ENCODE measurements at regions of chr22 and their contacts with region 1.

Region 1: DNA sequence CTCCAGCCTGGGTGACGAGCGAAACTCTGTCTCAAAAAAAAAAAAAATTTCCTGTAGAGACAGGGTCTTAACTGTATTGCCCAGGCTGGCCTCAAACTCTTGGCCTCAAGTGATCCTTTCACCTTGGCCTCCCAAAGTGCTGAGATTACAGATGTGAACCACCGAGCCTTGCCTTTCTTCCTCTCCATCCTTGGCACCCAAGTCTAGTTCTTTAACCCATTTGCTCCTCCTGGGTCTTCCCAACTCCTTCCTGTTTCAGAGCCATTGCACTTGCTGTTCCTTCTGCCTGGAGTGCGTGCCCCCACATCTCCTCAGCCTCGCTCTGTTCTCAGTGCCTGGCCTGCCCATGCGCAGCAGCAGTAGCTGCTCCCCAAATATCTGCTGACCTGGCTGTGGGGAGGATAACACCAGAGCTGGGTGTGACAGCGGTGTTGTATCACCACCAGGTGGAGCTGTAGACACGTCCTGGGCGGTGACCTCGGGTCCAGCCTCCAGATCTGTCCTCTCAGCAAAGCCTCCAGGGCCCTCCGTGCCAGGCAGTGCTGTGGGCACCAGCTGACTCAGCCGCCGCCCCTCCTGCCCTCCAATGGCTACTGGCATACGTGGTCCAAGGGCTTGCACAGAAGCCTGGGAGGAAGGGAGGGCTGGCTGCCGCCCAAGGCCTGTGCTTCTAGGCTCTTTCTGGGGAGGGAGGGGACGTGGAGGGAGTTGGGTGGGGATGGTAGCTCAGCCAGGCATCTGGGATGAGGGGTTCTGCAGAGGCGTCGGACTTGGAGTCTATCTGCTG is 22.0 kb downstream of the TEF start:
- DNase-seq: peak; percentile 95
- CTCF ChIP-seq: peak; percentile 94

Region 2: DNA sequence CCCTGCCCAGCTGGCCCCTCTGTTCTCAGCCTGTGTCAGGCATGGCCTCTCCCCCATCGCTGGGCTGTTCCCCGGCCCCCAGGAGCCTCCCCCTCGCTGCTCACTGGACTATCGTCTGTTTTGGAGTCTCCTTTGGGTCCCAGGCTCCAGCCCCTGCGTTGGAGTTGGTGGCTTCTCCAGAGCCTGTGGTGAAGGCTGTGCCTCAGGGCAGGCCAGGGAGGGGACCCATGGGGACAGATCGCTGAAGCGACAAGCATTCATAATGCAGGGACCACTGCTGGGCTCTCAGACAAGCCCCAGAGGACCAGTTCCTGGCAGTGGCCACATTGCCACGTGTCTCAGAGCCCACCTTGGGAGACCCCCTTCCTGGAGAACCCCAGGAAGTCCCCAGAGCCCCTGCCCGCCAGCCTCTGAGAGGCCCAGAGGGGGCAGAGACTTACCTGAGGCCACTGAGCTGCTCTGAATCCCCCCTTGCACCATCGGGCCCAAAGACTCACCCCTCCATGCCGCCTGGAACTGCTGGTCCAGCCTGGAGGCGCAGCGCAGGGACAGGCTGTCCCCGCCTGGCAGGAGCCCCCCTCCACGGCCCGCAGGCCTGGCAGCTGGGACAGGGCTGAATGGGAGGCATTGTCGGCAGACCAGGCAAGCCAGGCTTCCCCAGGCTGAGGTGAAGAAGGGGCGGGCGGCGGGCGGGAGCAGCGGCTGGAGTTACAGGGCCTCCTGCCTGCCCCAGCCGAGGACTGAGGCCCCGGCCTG is 163.2 kb before region 1 on chr22 and contains the start of gene CHADL:
- CTCF ChIA-PET with region 1: no interaction called
- POLR2A ChIA-PET with region 1: no interaction called
- DNase-seq: no peak
- CTCF ChIP-seq: no peak

Region 3: DNA sequence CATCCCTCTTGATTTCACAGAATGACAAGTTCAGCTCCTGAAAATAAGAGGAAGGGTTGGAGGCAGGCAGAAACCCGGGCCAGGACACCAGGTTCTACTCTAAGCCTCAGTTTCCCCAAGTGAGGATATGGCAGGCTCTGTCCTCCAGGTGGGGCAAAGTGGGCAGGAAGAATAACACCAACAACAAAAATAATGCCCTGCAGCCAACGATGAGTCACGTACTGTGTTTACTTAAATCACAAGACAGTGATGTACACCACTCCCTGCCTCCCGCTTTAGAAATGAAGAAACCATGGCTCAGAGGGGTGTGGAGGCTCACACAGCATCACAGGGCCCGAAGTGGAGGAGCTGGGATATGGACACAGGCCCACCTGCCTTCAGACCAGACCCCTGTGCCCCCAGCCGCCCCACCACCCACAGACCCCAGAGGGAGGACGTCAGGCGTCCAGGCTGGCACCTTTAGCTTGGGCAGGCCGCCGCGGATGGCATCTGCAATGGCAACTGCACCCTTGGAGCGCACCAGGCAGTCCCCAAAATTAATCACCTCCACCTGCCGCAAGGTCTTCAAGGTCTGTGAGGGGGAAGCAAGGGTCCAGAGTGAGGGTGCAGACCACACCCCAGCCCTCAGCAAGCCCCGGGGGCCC is 147.3 kb before region 1 on chr22:
- CTCF ChIA-PET with region 1: no interaction called
- POLR2A ChIA-PET with region 1: no interaction called
- DNase-seq: no peak
- CTCF ChIP-seq: no peak

Region 4: GRCh38 chr22:41381329-41382097 is 22.2 kb before region 1 on chr22 and contains the start of gene TEF:
- CTCF ChIA-PET with region 1: interaction called, 36 read pairs
- POLR2A ChIA-PET with region 1: interaction called, 6 read pairs
- DNase-seq: peak; percentile 99
- CTCF ChIP-seq: no peak

Region 5: DNA sequence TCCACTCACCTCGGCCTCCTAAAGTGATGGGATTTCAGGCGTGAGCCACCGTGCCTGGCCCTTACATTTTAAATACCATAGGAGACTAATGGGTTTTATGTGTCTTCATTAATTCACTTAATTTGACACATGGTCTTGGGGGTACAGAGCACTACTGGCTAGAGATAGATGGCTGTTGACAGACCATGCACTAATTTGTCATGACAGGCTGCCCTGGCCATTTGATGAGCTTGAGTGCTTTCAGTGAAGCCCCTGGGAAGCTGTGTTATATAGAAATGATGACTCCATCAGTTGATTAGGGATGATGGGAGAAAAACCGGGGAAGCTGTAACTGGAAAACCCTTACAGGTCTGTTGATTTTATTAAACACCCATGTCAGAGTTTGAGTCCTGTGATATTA is 58.2 kb after region 1 on chr22:
- CTCF ChIA-PET with region 1: interaction called, 14 read pairs
- POLR2A ChIA-PET with region 1: no interaction called
- DNase-seq: no peak
- CTCF ChIP-seq: no peak

Region 6: GRCh38 chr22:41501209-41501608 is 97.5 kb after region 1 on chr22:
- CTCF ChIA-PET with region 1: interaction called, 66 read pairs
- POLR2A ChIA-PET with region 1: no interaction called
- DNase-seq: peak; percentile 65
- CTCF ChIP-seq: no peak

Region 7: GRCh38 chr22:41532908-41533825 is 129.4 kb after region 1 on chr22:
- CTCF ChIA-PET with region 1: interaction called, 190 read pairs
- POLR2A ChIA-PET with region 1: no interaction called
- DNase-seq: peak; percentile 81
- CTCF ChIP-seq: peak; percentile 83

Measured in GM10248 (cell line).